A673 (cell line): ENCODE measurements at regions of chr11 and their contacts with region 1.

Region 1: DNA sequence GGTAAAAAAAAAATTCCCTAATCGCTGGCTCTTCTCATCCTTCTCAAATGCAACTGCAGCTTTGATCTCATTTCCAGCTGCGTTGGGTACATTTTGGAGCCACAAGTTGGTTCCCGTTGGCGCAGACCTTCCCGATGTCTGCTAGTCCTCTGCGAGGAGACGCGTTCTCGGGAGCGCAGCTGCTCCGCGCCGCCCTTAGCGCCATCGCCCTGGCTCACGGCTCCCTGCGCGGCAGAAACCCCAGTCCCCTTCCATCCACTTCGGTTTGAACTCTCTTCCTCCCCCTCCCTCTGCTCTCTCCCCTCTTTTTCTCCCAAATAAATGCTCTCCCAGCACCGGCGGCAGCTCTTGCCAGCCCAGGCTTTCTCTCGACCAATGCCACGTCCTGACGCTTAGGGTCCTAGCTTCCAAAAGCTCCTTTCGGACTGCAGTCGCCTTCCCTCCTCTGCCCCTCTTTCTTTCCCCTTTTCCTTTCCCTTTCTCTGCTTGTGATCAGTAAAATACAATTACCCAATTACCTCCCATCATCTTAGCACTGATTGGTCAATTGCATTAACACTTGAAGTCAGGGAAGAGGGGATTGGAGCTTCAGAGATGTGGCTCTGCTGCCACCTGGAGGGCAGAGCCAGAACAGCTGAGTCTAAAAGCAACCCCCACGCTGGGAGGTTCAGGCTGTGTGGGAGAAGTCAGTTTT is 1165.7 kb downstream of the LRRC4C start:
- DNase-seq: peak; percentile 99
- H3K4me3 ChIP-seq: peak overlapping the region; percentile 61
- H3K27ac ChIP-seq: peak overlapping the region; percentile 78
- H3K4me1 ChIP-seq: peaks cover 11% of the 10 kb centered on the region
- H3K27me3 ChIP-seq: no peaks in the 10 kb centered on the region
- CTCF ChIP-seq: peak; percentile 100

Region 2: GRCh38 chr11:39374963-39375698 is 918.7 kb before region 1 on chr11:
- CTCF ChIA-PET with region 1: no interaction called
- POLR2A ChIA-PET with region 1: interaction called, 3 read pairs
- intact Hi-C with region 1: loop called (anchors 2 kb)
- DNase-seq: peak; percentile 92
- H3K4me3 ChIP-seq: no peak overlapping the region
- H3K27ac ChIP-seq: peak overlapping the region; percentile 3
- H3K4me1 ChIP-seq: peaks cover 11% of the 10 kb centered on the region
- H3K27me3 ChIP-seq: no peaks in the 10 kb centered on the region
- CTCF ChIP-seq: peak; percentile 97

Region 3: DNA sequence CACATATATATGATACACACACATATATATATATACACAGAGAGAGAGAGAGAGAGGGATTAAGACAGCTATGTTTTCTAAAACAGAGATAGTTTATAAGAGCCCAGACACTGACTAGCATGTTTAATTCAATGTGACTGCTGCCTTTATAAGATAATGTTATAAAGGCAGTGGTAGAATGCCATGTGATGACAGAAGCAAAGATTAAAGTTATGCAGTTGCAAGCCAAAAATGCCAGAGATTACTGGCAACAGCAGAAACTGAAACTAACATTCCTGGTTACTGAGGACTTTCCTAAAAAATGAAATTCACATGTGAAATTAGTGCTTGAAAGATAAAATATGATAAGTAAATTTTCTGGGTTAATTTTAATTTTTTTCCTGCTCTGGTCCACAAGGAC is 723.3 kb before region 1 on chr11:
- CTCF ChIA-PET with region 1: no interaction called
- POLR2A ChIA-PET with region 1: no interaction called
- intact Hi-C with region 1: loop called (anchors 5 kb)
- DNase-seq: peak; percentile 72
- H3K4me3 ChIP-seq: no peak overlapping the region
- H3K27ac ChIP-seq: peak overlapping the region; percentile 37
- H3K4me1 ChIP-seq: peaks cover 38% of the 10 kb centered on the region
- H3K27me3 ChIP-seq: no peaks in the 10 kb centered on the region
- CTCF ChIP-seq: no peak

Region 4: GRCh38 chr11:39975091-39975490 is 318.7 kb before region 1 on chr11:
- CTCF ChIA-PET with region 1: no interaction called
- POLR2A ChIA-PET with region 1: no interaction called
- intact Hi-C with region 1: loop called (anchors 10 kb)
- DNase-seq: peak; percentile 92
- H3K4me3 ChIP-seq: no peak overlapping the region
- H3K27ac ChIP-seq: no peak overlapping the region
- H3K4me1 ChIP-seq: peaks cover 25% of the 10 kb centered on the region
- H3K27me3 ChIP-seq: peaks cover 7% of the 10 kb centered on the region
- CTCF ChIP-seq: no peak

Region 5: DNA sequence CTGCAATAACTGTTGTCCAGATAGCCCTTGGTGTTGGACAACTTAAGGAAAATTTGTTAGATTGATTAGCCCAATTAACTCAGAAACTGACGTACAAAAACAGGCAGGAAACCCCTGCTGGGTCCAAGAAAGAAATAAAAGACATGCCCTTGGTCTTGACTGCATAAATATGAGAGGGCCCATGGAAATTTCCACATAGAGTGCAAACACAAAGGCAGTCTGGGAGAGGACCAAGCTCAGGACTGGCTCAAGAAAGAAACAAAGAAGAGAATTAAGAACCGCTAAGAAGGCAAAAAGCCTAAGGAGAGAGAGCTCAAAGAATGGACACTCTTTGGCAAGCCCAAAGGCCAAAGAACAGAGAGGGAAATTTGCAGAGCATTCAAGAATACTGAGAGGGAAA is 78.2 kb before region 1 on chr11:
- CTCF ChIA-PET with region 1: no interaction called
- POLR2A ChIA-PET with region 1: no interaction called
- intact Hi-C with region 1: loop called (anchors 5 kb)
- DNase-seq: peak; percentile 89
- H3K4me3 ChIP-seq: no peak overlapping the region
- H3K27ac ChIP-seq: peak overlapping the region; percentile 39
- H3K4me1 ChIP-seq: peaks cover 53% of the 10 kb centered on the region
- H3K27me3 ChIP-seq: no peaks in the 10 kb centered on the region
- CTCF ChIP-seq: no peak